ENCODE measurements at regions of chr5 and their contacts with region 1.

Region 1: GRCh38 chr5:170225326-170226128 is 7.3 kb upstream of the C5orf58 start:
- DNase-seq: peak; percentile 92
- H3K4me3 ChIP-seq: no peak overlapping the region
- H3K27ac ChIP-seq: peak overlapping the region in 1 of 2 donors; percentile 41
- H3K4me1 ChIP-seq: peaks cover 19% of the 10 kb centered on the region
- H3K27me3 ChIP-seq: no peaks in the 10 kb centered on the region
- CTCF ChIP-seq: peak; percentile 73 to 86 (median 79)
- POLR2A ChIP-seq: no peak

Region 2: DNA sequence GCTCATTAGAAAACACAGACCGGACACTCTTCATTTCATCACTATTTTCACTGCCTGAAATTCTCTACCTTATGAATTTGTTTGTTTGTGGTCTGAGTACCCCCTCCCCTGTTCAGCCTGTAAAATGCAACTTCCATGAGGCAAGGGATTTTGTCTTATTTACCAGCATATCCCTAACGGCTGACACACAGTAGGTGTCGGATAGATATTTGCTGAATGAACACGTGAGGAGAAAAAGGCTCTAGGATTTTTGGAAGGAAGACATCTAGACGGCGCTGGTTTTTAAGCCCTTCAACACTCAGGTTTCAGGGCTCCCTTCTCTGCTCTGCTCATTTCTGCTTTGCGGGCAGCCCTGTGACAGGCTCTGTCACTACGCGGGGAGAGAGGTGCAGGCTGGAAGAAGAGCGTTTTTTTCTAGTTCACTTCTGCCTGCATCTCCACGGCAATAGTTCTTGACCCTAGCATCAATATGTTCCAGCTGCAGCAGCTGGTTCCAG is 122.7 kb after region 1 on chr5:
- intact Hi-C with region 1: loop called (anchors 10 kb)
- DNase-seq: no peak
- H3K4me3 ChIP-seq: no peak overlapping the region
- H3K27ac ChIP-seq: peak overlapping the region; percentile 61 to 77
- H3K4me1 ChIP-seq: peaks cover 8% of the 10 kb centered on the region
- H3K27me3 ChIP-seq: no peaks in the 10 kb centered on the region
- CTCF ChIP-seq: peak; percentile 14 to 54 (median 43)
- POLR2A ChIP-seq: no peak

Region 3: GRCh38 chr5:170420780-170421412 is 195.4 kb after region 1 on chr5:
- intact Hi-C with region 1: loop called (anchors 5 kb)
- DNase-seq: peak; percentile 79
- H3K4me3 ChIP-seq: no peak overlapping the region
- H3K27ac ChIP-seq: no peak overlapping the region
- H3K4me1 ChIP-seq: peaks cover 4% of the 10 kb centered on the region
- H3K27me3 ChIP-seq: no peaks in the 10 kb centered on the region
- CTCF ChIP-seq: peak; percentile 59 to 74 (median 65)
- POLR2A ChIP-seq: no peak

Region 4: DNA sequence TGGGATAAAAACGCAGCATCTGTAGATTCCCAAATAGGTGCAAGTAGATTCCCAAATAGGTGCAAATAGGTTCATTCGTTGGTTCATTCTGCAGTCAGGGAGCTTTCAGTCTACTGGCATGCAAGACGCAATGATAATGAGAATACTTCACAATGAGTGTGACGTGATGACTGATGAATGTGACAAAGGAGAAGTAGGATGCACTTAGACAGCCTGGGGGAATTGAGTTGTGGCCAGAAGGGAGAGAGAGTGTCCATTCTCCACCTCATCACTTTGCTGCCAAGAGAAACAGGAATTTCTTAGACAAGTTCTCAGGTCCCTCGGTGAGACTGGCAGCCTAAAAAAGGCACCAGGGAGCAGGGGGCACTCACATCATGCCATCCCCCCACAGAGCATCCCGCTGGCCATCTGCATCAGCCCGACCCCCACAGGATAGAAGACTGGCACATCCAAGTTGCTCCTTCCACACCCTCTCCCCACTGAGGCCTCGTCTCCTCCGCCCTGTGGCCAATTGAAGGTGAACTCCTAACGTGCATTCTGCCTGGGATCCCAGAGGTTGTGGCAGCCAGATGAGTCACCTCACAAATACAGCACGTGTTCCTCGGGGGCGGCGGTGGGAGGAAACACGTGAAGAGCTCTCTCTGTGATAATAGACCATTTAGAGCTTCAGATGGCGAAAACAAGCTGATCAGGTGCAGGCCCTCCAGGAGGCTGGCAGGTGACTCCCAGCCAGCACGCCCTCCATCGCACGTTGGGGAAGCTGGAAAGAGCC is 258.4 kb after region 1 on chr5:
- intact Hi-C with region 1: no loop called
- DNase-seq: no peak
- H3K4me3 ChIP-seq: no peak overlapping the region
- H3K27ac ChIP-seq: no peak overlapping the region
- H3K4me1 ChIP-seq: peaks cover 7% of the 10 kb centered on the region
- H3K27me3 ChIP-seq: no peaks in the 10 kb centered on the region
- CTCF ChIP-seq: no peak
- POLR2A ChIP-seq: no peak

Region 5: DNA sequence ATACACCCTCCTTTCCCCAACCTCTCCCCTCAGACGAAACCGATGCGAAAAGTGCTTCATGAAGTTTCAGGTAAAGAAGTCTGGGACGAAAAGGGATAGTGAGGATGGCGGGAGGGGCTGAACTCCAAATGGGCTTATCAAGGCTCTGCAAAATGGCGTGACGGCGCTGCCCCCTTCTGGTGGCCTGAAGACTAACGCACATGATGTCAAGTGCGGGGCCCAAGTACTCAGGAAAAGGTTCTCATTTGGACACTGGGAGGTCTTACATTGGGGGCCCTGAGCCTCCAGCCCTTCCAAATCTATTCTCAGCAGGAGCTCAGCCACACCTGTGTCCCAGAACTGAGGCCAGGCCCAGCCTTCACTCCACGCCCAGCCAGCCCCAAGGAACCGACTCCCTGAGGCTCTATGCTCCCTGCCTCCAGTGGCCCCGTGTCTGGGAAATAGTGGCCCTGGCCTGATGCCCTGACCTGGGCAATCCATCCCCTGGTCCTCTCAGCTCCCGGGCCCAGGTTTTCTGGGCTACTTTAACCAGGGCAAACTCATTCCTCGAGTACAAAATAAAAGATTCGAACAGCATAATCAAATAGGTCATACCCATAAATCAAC is 398.2 kb after region 1 on chr5:
- intact Hi-C with region 1: loop called (anchors 10 kb)
- DNase-seq: peak; percentile 74
- H3K4me3 ChIP-seq: no peak overlapping the region
- H3K27ac ChIP-seq: no peak overlapping the region
- H3K4me1 ChIP-seq: no peaks in the 10 kb centered on the region
- H3K27me3 ChIP-seq: no peaks in the 10 kb centered on the region
- CTCF ChIP-seq: peak; percentile 28 to 60 (median 58)
- POLR2A ChIP-seq: no peak

Measured in testis (tissue), 5 donors.